AG04449 (cell line): ENCODE measurements at regions of chr9 and their contacts with region 1.

Region 1: GRCh38 chr9:113591001-113591898 is 127.7 kb downstream of the RGS3 start:
- DNase-seq: no peak
- H3K4me3 ChIP-seq: no peak overlapping the region
- CTCF ChIP-seq: peak; percentile 86

Region 2: DNA sequence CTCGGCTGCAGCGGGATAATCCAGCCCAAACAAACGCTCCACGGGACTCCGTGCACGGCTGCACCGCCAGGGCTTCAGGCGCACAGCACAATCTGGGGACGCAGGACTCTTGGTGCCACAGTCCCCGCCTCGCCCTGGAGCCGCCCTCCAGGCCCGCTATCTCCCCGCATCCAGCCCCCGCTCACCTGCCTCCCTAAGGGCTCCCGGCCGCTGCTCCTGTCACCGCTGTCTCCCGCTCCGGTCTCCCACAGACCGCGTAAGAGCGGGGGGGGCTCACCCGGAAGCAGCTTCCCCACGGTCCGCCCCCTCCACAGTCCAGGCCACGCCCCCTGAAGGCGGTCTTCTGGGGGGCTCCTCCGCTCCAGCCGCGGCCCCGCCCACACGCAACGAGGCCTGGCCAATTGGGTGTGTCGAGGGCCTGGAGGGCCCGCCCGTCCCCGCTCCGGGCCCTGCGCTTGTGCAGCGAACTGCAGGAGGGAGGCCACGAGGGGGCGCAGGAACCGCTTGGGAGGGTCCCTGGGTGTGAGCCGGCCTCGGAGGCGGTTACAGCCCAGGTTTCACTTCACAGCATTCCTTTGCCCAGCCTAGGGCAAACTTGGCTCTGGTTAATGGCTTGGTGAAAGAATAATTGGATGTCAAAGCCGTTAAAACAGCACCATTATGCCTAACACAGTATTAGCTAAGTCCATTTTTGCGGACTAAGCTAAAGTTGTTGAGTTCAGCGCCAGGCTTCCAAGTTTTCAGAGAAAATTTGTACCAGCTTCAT is 190.0 kb before region 1 on chr9 and contains the start of gene ALAD:
- CTCF ChIA-PET with region 1: interaction called, 20 read pairs
- POLR2A ChIA-PET with region 1: no interaction called
- DNase-seq: peak; percentile 80
- H3K4me3 ChIP-seq: peak within 1 kb of the TSS; percentile 92
- CTCF ChIP-seq: peak; percentile 99

Region 3: GRCh38 chr9:113454914-113455761 is 136.1 kb before region 1 on chr9:
- CTCF ChIA-PET with region 1: interaction called, 405 read pairs
- POLR2A ChIA-PET with region 1: interaction called, 3 read pairs
- DNase-seq: peak; percentile 67
- H3K4me3 ChIP-seq: no peak overlapping the region
- CTCF ChIP-seq: no peak

Region 4: DNA sequence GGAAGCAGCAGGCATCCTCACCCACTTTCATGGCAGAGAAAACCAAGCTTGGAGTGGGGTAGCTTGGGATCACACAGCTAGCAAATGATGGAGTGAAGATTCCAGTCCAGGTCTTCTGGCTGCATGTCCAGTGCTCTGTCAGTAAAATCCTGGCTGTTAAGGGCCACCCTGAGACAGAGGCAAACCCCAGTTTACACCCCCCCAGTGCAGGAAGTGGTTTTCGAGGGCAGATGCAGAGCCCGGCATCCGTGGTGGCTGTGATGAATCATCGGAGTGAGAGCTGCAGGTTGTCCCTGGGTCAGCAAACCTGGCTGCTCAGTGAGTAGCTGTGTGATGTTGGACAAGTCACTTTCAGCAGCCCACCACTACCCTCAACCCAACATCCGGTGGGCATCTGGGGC is 12.4 kb before region 1 on chr9:
- CTCF ChIA-PET with region 1: interaction called, 57 read pairs
- POLR2A ChIA-PET with region 1: interaction called, 6 read pairs
- DNase-seq: peak; percentile 74
- H3K4me3 ChIP-seq: no peak overlapping the region
- CTCF ChIP-seq: no peak

Region 5: GRCh38 chr9:113609562-113610318 is 18.5 kb after region 1 on chr9:
- CTCF ChIA-PET with region 1: interaction called, 28 read pairs
- POLR2A ChIA-PET with region 1: interaction called, 7 read pairs
- DNase-seq: no peak
- H3K4me3 ChIP-seq: no peak overlapping the region
- CTCF ChIP-seq: no peak

Region 6: DNA sequence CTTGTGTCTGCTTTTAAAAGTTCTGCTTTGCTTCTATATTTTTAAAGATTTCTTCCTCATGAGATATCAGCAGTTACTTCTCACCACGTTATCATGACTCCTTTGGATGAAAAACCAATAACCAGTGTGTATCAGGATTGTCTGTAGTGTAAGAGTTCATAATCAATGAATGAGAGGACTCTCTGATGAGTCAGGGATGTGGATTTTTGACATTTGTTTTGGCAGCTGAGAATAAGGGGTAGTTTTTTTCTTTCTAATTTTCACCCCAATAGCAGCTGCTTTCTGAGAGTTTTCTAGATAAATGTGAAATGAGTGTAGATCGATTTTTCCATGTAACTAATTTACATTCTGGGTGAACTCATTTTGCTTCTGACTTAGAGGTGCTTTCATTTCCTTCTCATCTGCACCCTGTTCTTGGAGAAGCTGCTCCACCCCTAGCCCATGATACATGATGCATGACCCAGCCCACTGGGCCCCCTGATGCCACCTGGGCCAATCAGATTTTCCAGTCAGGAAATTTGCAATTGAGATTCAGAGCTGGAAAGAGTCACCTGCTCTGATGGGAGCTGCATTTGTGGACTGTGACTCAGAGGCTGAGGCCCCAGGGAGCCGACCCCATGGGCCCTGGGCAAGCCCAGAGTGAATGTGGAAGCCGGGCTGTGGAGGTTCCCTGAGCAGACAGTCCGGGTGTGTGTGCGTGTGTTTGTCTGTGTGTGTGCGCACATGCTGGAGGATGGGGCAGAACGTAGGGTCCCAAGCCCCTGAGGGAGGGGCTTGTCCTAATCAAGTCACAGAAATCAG is 31.6 kb after region 1 on chr9:
- CTCF ChIA-PET with region 1: interaction called, 8 read pairs
- POLR2A ChIA-PET with region 1: interaction called, 27 read pairs
- DNase-seq: no peak
- H3K4me3 ChIP-seq: no peak overlapping the region
- CTCF ChIP-seq: no peak